Dorsolateral prefrontal cortex (tissue), 120 donors: ENCODE measurements at regions of chr18 and their contacts with region 1.

Region 1: DNA sequence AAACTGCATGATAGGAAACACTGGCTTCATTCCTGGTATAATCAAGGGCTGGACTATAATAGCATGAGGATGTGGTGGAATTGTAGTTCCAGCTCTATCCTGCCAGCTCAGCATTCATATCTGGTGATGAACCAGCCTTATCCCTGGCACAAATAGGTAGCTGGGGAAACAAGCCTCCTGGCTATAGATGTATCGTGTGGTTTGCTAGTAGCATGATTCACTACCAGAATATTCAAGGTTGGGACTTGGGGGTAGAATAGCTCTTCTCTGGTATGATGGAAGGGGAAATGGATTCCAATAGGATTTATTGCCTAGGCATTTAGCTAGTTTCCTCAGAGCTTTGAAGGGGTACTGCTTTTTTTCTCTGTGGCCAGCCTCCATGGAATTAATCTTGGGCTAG is 532.8 kb downstream of the FBXO15 start:
- DNase-seq: no peak
- H3K4me3 ChIP-seq: no peak overlapping the region
- H3K27ac ChIP-seq: peak overlapping the region in 1 of 59 donors; percentile 26
- H3K27me3 ChIP-seq: no peaks in the 10 kb centered on the region
- CTCF ChIP-seq: no peak

Region 2: GRCh38 chr18:73663581-73663980 is 48.8 kb after region 1 on chr18:
- intact Hi-C with region 1: loop called in 1 of 2 experiments (anchors 5 kb)
- DNase-seq: no peak
- H3K4me3 ChIP-seq: no peak overlapping the region
- H3K27ac ChIP-seq: no peak overlapping the region
- H3K27me3 ChIP-seq: no peaks in the 10 kb centered on the region
- CTCF ChIP-seq: no peak

Region 3: GRCh38 chr18:73980289-73980979 is 365.6 kb after region 1 on chr18:
- intact Hi-C with region 1: no loop called
- DNase-seq: peak in 2 of 10 donors; percentile 41 to 45
- H3K4me3 ChIP-seq: no peak overlapping the region
- H3K27ac ChIP-seq: peak overlapping the region in 39 of 59 donors; percentile 1 to 77 (median 50)
- H3K27me3 ChIP-seq: no peaks in the 10 kb centered on the region
- CTCF ChIP-seq: peak in 32 of 56 donors; percentile 5 to 51 (median 29)